CD8-positive, alpha-beta T cell (primary cell): ENCODE measurements at regions of chr10 and their contacts with region 1.

Region 1: DNA sequence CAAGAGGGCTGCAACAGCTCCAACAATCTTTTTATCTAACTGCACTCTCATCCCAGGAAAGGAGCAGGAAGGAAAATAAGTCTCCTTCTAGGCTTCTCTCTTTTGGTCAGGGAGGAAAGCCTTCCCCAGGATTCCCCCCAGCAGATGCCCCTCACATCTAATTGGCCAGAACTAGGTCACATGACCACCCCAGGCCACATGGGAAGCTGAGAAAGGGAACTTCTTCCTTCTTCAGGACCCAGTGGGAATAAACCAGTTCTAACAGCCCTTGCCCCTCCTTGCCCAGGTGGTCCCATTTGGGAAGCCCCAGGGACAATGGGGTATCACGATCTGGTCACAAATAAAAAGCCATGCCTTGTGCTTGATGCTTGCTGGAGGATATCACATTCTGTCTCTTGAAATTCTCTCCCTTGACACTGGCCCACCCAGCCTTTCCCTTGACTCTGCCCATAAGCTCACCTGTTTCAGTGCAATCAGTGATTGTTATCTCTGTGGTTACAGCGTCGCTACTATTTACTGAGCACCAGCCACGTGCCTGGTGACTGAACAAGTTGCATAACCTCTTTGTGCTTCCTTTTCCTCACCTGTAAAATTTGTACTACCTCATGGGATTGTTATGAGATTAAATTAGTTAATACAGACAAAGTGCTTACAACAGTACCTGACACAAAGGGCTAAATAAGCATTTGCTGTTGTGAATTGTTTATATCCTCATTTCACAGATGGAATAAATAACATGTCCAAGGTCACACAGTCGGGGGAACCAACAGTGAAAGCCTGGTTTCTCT is 9.0 kb upstream of the TACR2 start:
- DNase-seq: peak in 5 of 9 experiments; percentile 23 to 76 (median 65)
- ATAC-seq: peak; percentile 84
- H3K4me3 ChIP-seq: no peak overlapping the region
- H3K4me3 Mint-ChIP-seq: no peak overlapping the region
- H3K27ac ChIP-seq: peak overlapping the region; percentile 32 to 44
- H3K27ac Mint-ChIP-seq: peak overlapping the region; percentile 69
- H3K4me1 ChIP-seq: peaks cover 36% of the 10 kb centered on the region
- H3K4me1 Mint-ChIP-seq: peaks cover 53% of the 10 kb centered on the region
- H3K27me3 ChIP-seq: no peaks in the 10 kb centered on the region
- H3K27me3 Mint-ChIP-seq: no peaks in the 10 kb centered on the region
- CTCF ChIP-seq: no peak

Region 2: GRCh38 chr10:69629897-69630650 is 204.4 kb after region 1 on chr10 and contains the start of gene FAM241B:
- CTCF ChIA-PET with region 1: no interaction called
- POLR2A ChIA-PET with region 1: no interaction called
- intact Hi-C with region 1: loop called in 1 of 2 experiments (anchors 10 kb)
- DNase-seq: peak; percentile 40 to 86 (median 75)
- ATAC-seq: peak; percentile 99
- H3K4me3 ChIP-seq: peak within 1 kb of the TSS; percentile 48 to 83
- H3K4me3 Mint-ChIP-seq: peak within 1 kb of the TSS; percentile 76
- H3K27ac ChIP-seq: peak within 1 kb of the TSS in 1 of 2 experiments; percentile 37
- H3K27ac Mint-ChIP-seq: peak within 1 kb of the TSS; percentile 70
- H3K4me1 ChIP-seq: peaks cover 21% of the 10 kb centered on the region
- H3K4me1 Mint-ChIP-seq: peaks cover 24% of the 10 kb centered on the region
- H3K27me3 ChIP-seq: no peaks in the 10 kb centered on the region
- H3K27me3 Mint-ChIP-seq: no peaks in the 10 kb centered on the region
- CTCF ChIP-seq: peak; percentile 100
- total RNA-seq, gene FAM241B: 7.4 to 9.1 TPM